K562 (cell line): ENCODE measurements at regions of chr3 and their contacts with region 1.

Region 1: DNA sequence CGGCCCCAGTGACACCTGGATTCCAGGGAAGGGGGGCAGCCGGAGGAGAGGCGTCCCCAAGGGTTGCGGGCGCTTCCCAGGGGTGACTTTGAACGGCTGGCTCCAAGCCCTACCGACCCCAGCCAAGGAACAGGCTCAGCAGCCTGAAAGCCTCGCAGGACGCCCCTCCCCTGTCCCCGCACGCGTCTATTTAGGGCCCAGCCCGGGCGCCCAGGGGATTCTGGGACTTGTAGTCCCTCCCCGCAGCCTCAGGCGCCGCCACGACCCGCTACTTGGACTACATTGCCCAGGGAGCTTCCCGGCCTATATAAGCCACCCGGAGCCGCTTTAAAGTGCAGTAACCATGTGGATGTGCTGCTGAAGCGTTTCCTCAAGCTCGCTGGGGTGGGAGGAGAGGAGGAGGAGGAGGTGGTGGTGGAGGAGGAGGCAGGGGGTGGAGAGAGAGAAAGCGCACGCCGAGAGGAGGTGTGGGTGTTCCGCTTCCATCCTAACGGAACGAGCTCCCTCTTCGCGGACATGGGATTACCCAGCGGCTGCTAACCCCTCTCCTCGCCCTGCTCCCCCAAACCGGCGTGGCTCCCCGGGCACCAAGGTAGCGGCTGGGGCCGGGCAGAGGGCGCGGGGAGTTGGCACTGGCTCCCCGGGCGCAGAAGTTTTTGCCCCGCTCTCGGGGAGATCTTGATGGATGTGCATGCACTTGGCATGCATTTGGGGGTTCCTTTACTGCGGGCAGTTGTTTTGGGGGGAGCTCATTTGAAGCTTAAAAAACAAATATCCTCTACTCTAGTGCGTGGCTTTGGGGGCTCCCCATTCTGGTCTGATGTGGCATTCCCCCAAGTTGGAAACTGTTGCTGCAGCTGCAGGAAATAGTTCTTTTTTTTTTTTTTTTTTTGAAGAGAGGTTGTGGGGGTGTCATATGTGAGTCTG is at the start of gene ITPR1:
- DNase-seq: peak; percentile 97 to 100 (median 98)
- ATAC-seq: peak; percentile 93
- H3K4me3 ChIP-seq: peak within 1 kb of the TSS; percentile 61
- H3K27ac ChIP-seq: peak within 1 kb of the TSS; percentile 52
- H3K4me1 ChIP-seq: peaks cover 17 to 25% of the 10 kb centered on the region in 2 experiments
- H3K27me3 ChIP-seq: no peaks in the 10 kb centered on the region
- CTCF ChIP-seq: peak; percentile 7 to 39 (median 17); a peak in 3 of 6 replicates
- EP300 ChIP-seq: 0 out of 2 replicates have a peak, but pooled peaks have one; percentile 3
- POLR2A ChIP-seq: peak; percentile 99
- RAD21 ChIP-seq: peak; percentile 50 to 52; a peak in 3 of 4 replicates
- polyA plus RNA-seq, gene ITPR1: 26.2 to 33.9 TPM

Region 2: GRCh38 chr3:4083225-4084011 is 409.9 kb before region 1 on chr3:
- CTCF ChIA-PET with region 1: no interaction called
- POLR2A ChIA-PET with region 1: no interaction called
- in situ Hi-C with region 1: no loop called
- intact Hi-C with region 1: no loop called
- DNase-seq: no peak
- ATAC-seq: no peak
- H3K4me3 ChIP-seq: no peak overlapping the region
- H3K27ac ChIP-seq: no peak overlapping the region
- H3K4me1 ChIP-seq: no peaks in the 10 kb centered on the region
- H3K27me3 ChIP-seq: no peaks in the 10 kb centered on the region
- CTCF ChIP-seq: 0 out of 6 replicates have a peak, but pooled peaks of 1 of the 3 experiments have one; percentile 14
- EP300 ChIP-seq: no peak
- POLR2A ChIP-seq: no peak
- RAD21 ChIP-seq: peak; percentile 46 to 55; a peak in 3 of 4 replicates

Region 3: GRCh38 chr3:4207672-4208071 is 285.6 kb before region 1 on chr3:
- CTCF ChIA-PET with region 1: no interaction called
- POLR2A ChIA-PET with region 1: no interaction called
- in situ Hi-C with region 1: no loop called
- intact Hi-C with region 1: no loop called
- DNase-seq: no peak
- ATAC-seq: no peak
- H3K4me3 ChIP-seq: no peak overlapping the region
- H3K27ac ChIP-seq: no peak overlapping the region
- H3K4me1 ChIP-seq: no peaks in the 10 kb centered on the region; a peak in 1 of 5 replicates
- H3K27me3 ChIP-seq: no peaks in the 10 kb centered on the region
- CTCF ChIP-seq: no peak
- EP300 ChIP-seq: no peak
- POLR2A ChIP-seq: no peak
- RAD21 ChIP-seq: no peak

Region 4: DNA sequence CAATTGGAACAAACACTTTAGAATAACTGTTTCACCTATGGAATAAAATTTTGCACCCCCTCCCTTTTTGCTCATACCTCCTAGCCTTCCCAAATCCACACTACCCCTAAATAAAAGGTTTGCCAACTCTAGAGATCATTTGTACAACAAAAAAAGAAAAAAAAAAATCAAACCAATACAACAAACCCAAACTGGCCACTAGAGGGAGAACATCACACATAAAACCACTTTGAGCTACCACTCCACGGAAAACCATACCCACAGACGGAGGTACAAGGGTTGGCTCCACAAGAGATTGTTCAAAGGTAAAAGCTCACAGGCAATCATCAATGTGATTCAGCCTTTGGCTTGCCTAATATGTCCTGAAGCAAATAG is 142.5 kb before region 1 on chr3:
- CTCF ChIA-PET with region 1: no interaction called
- POLR2A ChIA-PET with region 1: interaction called, 27 read pairs
- in situ Hi-C with region 1: no loop called
- intact Hi-C with region 1: loop called (anchors 2 kb)
- DNase-seq: peak; percentile 69 to 87 (median 76)
- ATAC-seq: peak; percentile 88
- H3K4me3 ChIP-seq: peak overlapping the region; percentile 4; the same call in 1 of the 2 replicates
- H3K27ac ChIP-seq: peak overlapping the region; percentile 82
- H3K4me1 ChIP-seq: peaks cover 0 to 19% of the 10 kb centered on the region in 2 experiments; a peak in 4 of 5 replicates
- H3K27me3 ChIP-seq: no peaks in the 10 kb centered on the region
- CTCF ChIP-seq: peak; percentile 77 to 94 (median 89)
- EP300 ChIP-seq: no peak
- POLR2A ChIP-seq: no peak
- RAD21 ChIP-seq: peak; percentile 84 to 88

Region 5: DNA sequence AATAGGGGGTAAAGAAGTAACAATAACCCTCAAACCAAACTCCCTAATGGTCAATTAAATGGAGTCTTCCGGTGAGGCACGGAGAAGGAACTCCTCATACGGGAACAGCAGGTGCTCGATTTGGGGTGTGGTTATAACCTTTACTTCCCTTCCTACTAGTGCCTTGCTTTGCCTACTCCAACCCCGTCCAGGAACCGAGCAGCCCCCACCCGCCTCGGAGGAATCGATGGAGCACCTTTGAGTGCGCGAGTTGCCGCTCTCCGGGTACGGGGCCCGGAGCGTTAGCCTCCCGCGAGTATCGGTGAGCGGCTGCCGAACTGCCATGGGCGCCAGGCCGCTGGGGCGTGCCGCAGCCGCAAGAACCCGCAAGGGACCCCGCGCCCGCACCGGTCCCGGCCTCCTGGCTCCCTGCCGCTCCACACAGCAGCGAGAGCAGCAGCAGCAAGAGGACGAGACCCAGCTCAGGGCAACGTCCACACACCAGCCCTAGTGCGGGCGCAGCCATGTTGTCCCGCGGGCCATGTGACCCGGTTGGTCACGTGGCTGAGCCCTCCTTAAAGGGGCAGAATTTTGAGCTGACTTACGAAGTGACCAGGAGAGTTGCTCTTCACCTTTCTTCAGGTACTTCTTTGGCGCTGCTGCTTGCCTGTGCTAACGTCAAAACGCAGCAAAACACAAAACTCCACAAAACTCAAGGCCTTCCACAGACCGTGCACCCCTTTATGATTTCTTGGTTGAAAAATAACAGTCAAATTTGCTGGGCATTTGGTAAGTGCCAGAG is 26.3 kb before region 1 on chr3 and contains the start of gene SUMF1:
- CTCF ChIA-PET with region 1: no interaction called
- POLR2A ChIA-PET with region 1: interaction called, 54 read pairs
- in situ Hi-C with region 1: no loop called
- intact Hi-C with region 1: loop called (anchors 1 kb)
- DNase-seq: peak; percentile 91 to 94 (median 94)
- ATAC-seq: peak; percentile 99
- H3K4me3 ChIP-seq: peak within 1 kb of the TSS; percentile 71
- H3K27ac ChIP-seq: peak within 1 kb of the TSS; percentile 75
- H3K4me1 ChIP-seq: peaks cover 13 to 14% of the 10 kb centered on the region in 2 experiments; a peak in 4 of 5 replicates
- H3K27me3 ChIP-seq: no peaks in the 10 kb centered on the region
- CTCF ChIP-seq: no peak
- EP300 ChIP-seq: 0 out of 2 replicates have a peak, but pooled peaks have one; percentile 12
- POLR2A ChIP-seq: peak; percentile 94
- RAD21 ChIP-seq: peak in 1 of 2 experiments; percentile 1; a peak in 1 of 4 replicates
- polyA plus RNA-seq, gene SUMF1: 1.3 to 1.4 TPM

Region 6: GRCh38 chr3:4512895-4513616 is 19.8 kb after region 1 on chr3:
- CTCF ChIA-PET with region 1: no interaction called
- POLR2A ChIA-PET with region 1: interaction called, 220 read pairs
- in situ Hi-C with region 1: no loop called
- intact Hi-C with region 1: no loop called
- DNase-seq: peak; percentile 40 to 71 (median 56)
- ATAC-seq: peak; percentile 74
- H3K4me3 ChIP-seq: no peak overlapping the region
- H3K27ac ChIP-seq: no peak overlapping the region
- H3K4me1 ChIP-seq: peaks cover 10 to 46% of the 10 kb centered on the region in 2 experiments; a peak in 4 of 5 replicates
- H3K27me3 ChIP-seq: no peaks in the 10 kb centered on the region
- CTCF ChIP-seq: no peak
- EP300 ChIP-seq: no peak
- POLR2A ChIP-seq: no peak
- RAD21 ChIP-seq: peak in 1 of 2 experiments; percentile 32; a peak in 1 of 4 replicates

Region 7: GRCh38 chr3:4543110-4543509 is 49.8 kb after region 1 on chr3:
- CTCF ChIA-PET with region 1: no interaction called
- POLR2A ChIA-PET with region 1: interaction called, 21 read pairs
- in situ Hi-C with region 1: no loop called
- intact Hi-C with region 1: no loop called
- DNase-seq: no peak
- ATAC-seq: no peak
- H3K4me3 ChIP-seq: no peak overlapping the region
- H3K27ac ChIP-seq: no peak overlapping the region
- H3K4me1 ChIP-seq: peaks cover 0 to 14% of the 10 kb centered on the region in 2 experiments; a peak in 3 of 5 replicates
- H3K27me3 ChIP-seq: no peaks in the 10 kb centered on the region
- CTCF ChIP-seq: no peak
- EP300 ChIP-seq: no peak
- POLR2A ChIP-seq: no peak
- RAD21 ChIP-seq: no peak